ENCODE measurements at regions of chr19 and their contacts with region 1.

Region 1: GRCh38 chr19:17331256-17331558 is 3.4 kb downstream of the ANO8 start:
- DNase-seq: no peak
- H3K4me3 ChIP-seq: no peak overlapping the region
- H3K27ac ChIP-seq: peak overlapping the region in 1 of 59 donors; percentile 19
- H3K27me3 ChIP-seq: no peaks in the 10 kb centered on the region
- CTCF ChIP-seq: no peak

Region 2: DNA sequence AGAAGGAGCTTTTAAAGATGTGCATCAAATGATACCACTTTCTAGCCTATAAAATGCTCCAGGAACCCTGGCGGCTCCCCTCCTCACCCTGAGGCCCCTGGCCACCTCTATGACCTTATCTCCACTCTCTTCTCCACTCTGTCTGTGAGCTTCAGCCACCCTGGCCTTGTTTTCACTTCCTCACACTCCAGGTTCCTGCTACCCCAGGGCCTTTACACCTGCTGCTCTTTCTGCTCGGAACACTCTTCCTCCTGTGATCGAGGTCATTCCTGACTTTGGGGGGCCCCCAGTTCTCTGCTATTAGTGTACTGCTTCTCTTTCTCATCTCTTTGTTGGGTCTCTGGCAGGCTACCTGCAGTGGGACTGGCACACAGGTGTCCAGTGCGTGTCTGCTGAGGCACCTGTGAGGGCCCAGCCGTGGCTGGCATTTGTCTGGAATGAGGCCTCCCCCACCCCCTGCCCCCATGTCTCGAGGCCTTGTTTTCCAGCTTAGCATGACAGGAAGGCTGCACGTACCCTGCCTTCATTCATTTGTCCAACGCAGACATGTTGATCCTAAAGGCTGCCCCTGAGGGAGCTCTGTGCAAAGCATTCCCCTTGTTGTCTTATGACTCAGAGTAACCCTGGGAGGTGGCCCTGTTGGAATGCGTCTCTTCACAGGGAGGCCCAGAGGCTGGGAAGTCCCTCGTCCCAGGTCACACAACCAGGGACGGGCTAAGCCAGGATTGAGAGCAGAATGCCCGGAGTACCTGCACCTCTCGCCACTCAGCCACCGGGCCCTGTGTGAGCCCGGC is 19.6 kb before region 1 on chr19:
- intact Hi-C with region 1: loop called in 1 of 2 experiments (anchors 2 kb)
- DNase-seq: no peak
- H3K4me3 ChIP-seq: no peak overlapping the region
- H3K27ac ChIP-seq: no peak overlapping the region
- H3K27me3 ChIP-seq: no peaks in the 10 kb centered on the region
- CTCF ChIP-seq: no peak

Region 3: DNA sequence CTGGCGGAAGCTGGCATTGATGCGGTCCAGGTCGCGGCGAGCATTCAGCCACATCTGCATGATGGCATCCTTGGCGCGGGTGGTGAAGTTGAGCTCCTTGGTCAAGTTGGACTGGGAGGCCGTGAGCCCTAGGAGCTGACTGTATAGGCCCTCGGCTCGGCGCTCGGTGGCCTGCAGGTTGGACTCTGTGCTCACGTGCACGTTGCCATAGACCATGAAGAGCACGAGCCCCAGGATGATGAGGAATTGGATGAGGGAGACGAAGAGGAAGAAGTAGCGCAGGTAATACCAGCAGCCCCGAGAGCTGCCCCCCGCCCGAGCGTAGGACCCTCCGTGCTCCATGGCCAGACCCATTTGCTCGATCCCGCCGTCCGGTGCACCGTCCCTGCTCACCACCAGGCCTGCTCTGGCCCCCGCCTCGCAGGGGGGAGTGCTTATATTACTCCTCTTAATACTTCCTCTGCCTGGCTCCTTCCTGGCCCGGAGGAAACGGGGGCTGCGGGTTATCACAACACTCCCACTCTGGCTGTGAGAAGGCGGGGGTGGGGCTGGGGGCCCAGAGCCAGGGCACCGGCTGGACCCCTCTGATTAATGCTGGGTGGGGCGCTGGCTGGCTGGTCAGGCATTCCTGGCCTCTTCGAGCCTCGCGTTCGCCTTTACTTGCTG is 45.9 kb after region 1 on chr19 and contains the start of gene PLVAP:
- intact Hi-C with region 1: no loop called
- DNase-seq: no peak
- H3K4me3 ChIP-seq: peak within 1 kb of the TSS in 18 of 59 donors; percentile 5 to 49 (median 20)
- H3K27ac ChIP-seq: no peak within 1 kb of the TSS
- H3K27me3 ChIP-seq: no peaks in the 10 kb centered on the region
- CTCF ChIP-seq: no peak
- total RNA-seq, gene PLVAP: 0.21 to 6.9 (median 1.7) TPM in 119 of 120 experiments, not detected in the other

Measured in dorsolateral prefrontal cortex (tissue), 120 donors.